ENCODE measurements at regions of chr22 and their contacts with region 1.

Region 1: DNA sequence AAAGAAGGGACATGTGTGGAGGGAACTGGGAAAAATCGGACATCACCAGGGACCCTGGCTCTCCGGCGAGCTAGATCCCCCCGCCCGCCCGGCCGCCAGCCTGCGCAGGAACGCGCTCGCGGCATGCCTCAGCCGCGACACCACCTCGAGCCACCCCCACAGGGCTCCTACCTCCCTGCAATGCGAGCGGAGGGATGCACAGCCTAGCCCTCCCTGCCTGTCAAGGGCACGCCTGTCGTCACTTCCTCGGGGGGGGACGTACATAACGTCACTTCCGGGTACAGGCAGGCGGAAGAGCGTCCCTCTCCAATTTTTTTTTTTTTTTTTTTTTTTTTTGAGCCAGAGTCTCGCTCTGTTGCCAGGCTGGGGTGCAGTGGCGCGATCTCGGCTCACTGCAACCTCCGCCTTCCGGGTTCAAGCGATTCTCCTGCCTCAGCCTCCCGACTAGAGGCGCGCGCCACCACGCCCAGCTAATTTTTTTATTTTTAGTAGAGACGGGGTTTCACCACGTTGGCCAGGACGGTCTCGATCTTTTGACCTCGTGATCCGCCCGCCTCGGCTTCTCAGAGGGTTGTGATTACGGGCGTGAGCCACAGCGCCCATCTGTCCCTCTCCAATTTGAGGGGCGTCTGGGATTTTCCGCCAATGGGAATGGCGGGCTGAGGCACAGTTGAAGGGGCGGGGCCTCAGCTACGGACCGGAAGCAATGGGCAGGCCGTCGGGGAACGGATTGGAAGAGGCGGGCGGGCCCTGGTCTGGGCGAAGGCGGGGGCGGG is at the start of gene TXN2:
- H3K4me3 Mint-ChIP-seq: peak within 1 kb of the TSS; percentile 80
- H3K27ac Mint-ChIP-seq: peak within 1 kb of the TSS; percentile 99
- H3K4me1 Mint-ChIP-seq: peaks cover 11% of the 10 kb centered on the region
- H3K27me3 Mint-ChIP-seq: no peaks in the 10 kb centered on the region

Region 2: GRCh38 chr22:36528795-36529751 is 47.5 kb after region 1 on chr22 and contains the start of gene EIF3D:
- intact Hi-C with region 1: loop called (anchors 2 kb)
- H3K4me3 Mint-ChIP-seq: peak within 1 kb of the TSS; percentile 86
- H3K27ac Mint-ChIP-seq: peak within 1 kb of the TSS; percentile 97
- H3K4me1 Mint-ChIP-seq: peaks cover 17% of the 10 kb centered on the region
- H3K27me3 Mint-ChIP-seq: peaks cover 2% of the 10 kb centered on the region

Measured in dendritic cell treated with granulocyte-macrophage colony-stimulating factor and Interleukin-4, amounts not matched to agents 40 ng/mL and 50 ng/mL, for 4 days (primary cell).